Colonic mucosa (tissue), 4 donors: ENCODE measurements at regions of chr6 and their contacts with region 1.

Region 1: GRCh38 chr6:165850434-165851019 is 187.5 kb upstream of the PDE10A start:
- DNase-seq: peak; percentile 72
- H3K4me3 ChIP-seq: no peak overlapping the region
- H3K27ac ChIP-seq: no peak overlapping the region
- H3K4me1 ChIP-seq: peaks cover 6% of the 10 kb centered on the region
- H3K27me3 ChIP-seq: peaks cover 20% of the 10 kb centered on the region
- CTCF ChIP-seq: peak; percentile 98

Region 2: GRCh38 chr6:165439928-165440554 is 410.5 kb before region 1 on chr6:
- intact Hi-C with region 1: loop called (anchors 10 kb)
- DNase-seq: no peak
- H3K4me3 ChIP-seq: no peak overlapping the region
- H3K27ac ChIP-seq: no peak overlapping the region
- H3K4me1 ChIP-seq: no peaks in the 10 kb centered on the region
- H3K27me3 ChIP-seq: no peaks in the 10 kb centered on the region
- CTCF ChIP-seq: no peak

Region 3: DNA sequence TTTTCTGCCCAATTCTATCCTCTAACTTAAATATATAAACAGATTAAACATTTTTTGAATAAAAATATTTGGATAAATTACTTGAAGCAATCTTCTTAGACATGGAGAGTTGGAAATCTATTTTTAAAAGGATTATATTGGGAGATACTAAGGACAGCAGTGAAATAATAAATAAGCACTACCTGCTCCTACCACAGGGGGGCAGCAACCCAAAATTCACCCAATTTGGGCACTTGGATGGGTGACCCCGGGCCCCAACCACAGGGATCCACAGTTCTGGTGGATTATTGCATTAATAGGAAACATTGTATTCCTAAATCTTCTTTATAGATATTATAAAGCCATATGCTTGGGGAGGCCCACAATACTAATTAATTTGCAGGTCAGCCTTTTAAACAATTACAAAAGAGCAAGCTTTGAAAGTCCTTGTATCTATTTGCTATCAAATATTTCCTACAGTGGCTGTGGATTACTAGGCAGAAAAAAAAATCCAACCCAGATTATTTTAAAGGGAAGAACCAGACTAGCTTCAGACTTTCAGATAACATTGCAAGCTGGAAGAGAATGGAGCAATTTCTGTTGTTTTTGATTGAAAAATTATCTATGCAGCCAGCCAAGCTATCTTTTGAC is 121.1 kb before region 1 on chr6:
- intact Hi-C with region 1: loop called (anchors 2 kb)
- DNase-seq: peak; percentile 54
- H3K4me3 ChIP-seq: no peak overlapping the region
- H3K27ac ChIP-seq: no peak overlapping the region
- H3K4me1 ChIP-seq: no peaks in the 10 kb centered on the region
- H3K27me3 ChIP-seq: no peaks in the 10 kb centered on the region
- CTCF ChIP-seq: peak; percentile 77